ENCODE measurements at regions of chr3 and their contacts with region 1.

Region 1: DNA sequence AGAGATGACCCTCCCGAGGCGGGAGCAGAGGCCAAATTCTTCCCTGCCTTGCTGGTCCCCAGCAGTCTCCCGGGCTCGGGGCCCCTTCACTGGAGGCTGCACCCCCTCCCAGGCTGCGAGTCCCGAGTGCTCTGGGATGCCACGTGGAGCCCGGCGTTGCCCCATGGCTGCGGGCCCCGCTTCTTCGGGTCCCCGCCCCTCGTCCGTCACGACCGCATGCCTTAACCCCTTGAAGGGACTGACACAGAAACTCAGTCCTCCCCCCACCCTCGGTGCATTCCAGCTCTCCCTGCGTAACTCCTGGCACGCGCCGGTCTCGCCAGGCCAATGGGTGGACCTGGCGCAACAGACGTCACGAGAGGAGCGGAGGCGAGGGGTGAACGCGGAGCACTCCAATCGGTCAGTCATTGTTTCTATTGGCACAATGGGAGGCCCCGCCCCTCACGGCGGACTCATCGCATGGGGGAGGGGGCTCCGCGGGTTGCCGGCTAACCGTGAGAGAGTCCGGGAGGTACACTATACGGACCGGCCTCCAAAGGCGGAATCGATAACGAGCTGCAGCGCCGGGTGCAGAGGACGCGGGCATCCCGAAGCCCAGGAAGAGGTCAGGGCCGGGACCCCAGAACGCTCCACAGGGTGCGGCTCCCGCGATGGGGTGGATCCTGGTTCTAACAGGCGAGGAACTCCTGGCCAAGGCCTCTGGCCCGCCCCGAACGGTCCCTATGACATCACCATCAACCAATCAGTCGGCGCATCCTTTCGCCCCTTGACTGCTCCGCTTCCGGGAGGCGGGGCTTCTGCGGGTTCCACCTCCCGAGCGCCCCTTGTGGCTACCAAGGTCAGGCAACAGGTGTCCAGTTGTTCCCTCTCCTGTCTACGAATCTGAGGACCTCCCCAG is 978 bp upstream of the CELSR3 start:
- DNase-seq: peak; percentile 97 to 99
- ATAC-seq: peak; percentile 85 to 87
- H3K4me3 ChIP-seq: peak overlapping the region; percentile 59
- H3K27ac ChIP-seq: peak overlapping the region; percentile 96 to 98
- H3K4me1 ChIP-seq: peaks cover 13% of the 10 kb centered on the region
- CTCF ChIP-seq: peak; percentile 62
- EP300 ChIP-seq: 0 out of 5 replicates have a peak, but pooled peaks of 1 of the 2 experiments have one; percentile 15
- POLR2A ChIP-seq: peak; percentile 64
- RAD21 ChIP-seq: no peak; a peak in 1 of 5 replicates

Region 2: GRCh38 chr3:48678056-48678455 is 14.4 kb after region 1 on chr3:
- CTCF ChIA-PET with region 1: interaction called, 34 read pairs
- POLR2A ChIA-PET with region 1: interaction called, 4 read pairs
- DNase-seq: no peak
- ATAC-seq: no peak
- H3K4me3 ChIP-seq: no peak overlapping the region
- H3K27ac ChIP-seq: no peak overlapping the region
- H3K4me1 ChIP-seq: peaks cover 12% of the 10 kb centered on the region
- CTCF ChIP-seq: no peak
- EP300 ChIP-seq: no peak
- POLR2A ChIP-seq: no peak
- RAD21 ChIP-seq: no peak

Region 3: DNA sequence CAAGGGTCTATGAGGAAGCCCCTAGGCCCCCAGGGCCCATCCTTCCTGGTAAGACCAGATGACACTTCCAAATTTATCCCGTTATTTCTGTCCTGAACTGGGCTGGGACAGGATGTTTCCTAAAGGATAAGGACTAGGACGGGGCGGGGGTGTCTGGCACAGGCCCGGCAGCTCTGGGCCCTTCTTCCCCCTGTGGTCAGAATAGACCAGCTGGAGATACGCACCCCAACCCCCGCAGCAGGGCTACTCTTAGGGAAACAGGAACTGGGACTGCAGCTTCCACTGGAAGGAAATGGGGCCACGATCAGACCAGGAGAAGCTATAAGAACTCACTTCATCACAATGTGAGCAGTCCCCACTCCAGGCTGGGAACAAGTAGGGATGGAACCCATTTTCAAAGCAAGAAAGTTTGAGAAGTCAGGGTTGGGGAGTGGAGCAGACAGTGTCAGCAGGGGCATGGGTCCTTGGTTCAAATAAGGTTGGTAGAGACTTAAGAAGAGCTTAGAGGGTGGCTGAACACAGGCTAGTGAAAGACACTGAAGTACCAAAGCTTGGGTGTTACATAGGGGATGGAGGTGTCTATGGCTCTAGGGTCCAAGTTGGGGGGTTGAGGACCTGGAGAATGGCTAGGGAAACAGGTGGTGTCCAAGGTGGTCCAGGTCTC is 20.9 kb after region 1 on chr3:
- CTCF ChIA-PET with region 1: interaction called, 13 read pairs
- POLR2A ChIA-PET with region 1: no interaction called
- DNase-seq: no peak
- ATAC-seq: no peak
- H3K4me3 ChIP-seq: peak overlapping the region; percentile 52
- H3K27ac ChIP-seq: peak overlapping the region; percentile 84 to 94; a peak in 5 of 6 replicates
- H3K4me1 ChIP-seq: peaks cover 30% of the 10 kb centered on the region
- CTCF ChIP-seq: no peak
- EP300 ChIP-seq: no peak
- POLR2A ChIP-seq: no peak
- RAD21 ChIP-seq: no peak

Measured in A549 (cell line).